CD4-positive, alpha-beta memory T cell (primary cell): ENCODE measurements at regions of chr21 and their contacts with region 1.

Region 1: DNA sequence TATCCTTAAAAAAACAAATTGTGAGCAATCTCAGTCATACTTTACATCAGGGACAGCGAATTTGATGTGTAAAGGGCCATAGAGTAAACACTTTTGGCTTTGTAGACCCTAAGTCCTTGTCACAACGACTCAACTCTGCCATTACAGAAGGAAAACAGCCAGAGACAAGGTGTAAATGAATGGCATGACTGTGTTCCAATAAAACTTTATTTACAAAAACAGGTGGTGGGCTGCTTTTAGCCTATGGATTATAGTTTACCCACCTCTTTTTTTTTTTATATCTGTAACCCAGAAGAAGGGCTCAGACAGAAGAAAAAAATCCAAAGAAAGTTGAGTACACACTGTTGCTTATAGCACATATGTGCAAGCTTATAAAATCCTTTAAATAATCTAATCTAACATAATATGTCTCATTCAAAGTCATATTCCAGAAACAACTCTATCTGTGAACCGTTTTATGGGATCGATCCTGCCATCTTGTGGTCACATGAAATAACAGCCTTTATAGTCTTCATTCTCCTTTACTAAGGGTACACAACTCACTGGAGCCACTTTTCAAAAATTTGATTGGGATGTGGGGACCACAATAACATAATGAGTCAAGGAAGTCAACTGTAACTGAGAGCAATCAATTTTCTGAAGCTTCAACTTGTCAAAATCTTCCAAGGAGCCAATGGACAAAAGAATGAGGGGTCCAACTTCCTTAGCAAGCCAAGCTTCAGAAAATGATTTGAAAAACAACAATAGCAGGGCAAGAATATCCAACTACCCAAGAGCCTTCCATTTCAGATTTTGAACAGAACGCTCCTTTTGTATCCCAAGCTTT is 142.2 kb upstream of the KRTAP19-8 start:
- DNase-seq: peak in 3 of 5 donors; percentile 28 to 49 (median 43)
- H3K4me3 ChIP-seq: peak overlapping the region; percentile 6 to 8
- H3K4me3 Mint-ChIP-seq: peak overlapping the region; percentile 70 to 94 (median 86)
- H3K27ac ChIP-seq: peak overlapping the region; percentile 56
- H3K27ac Mint-ChIP-seq: peak overlapping the region; percentile 93 to 95 (median 95)
- H3K4me1 ChIP-seq: peaks cover 91% of the 10 kb centered on the region
- H3K4me1 Mint-ChIP-seq: peaks cover 56 to 77% (median 67%) of the 10 kb centered on the region in 4 donors
- H3K27me3 ChIP-seq: no peaks in the 10 kb centered on the region
- H3K27me3 Mint-ChIP-seq: no peaks in the 10 kb centered on the region

Region 2: DNA sequence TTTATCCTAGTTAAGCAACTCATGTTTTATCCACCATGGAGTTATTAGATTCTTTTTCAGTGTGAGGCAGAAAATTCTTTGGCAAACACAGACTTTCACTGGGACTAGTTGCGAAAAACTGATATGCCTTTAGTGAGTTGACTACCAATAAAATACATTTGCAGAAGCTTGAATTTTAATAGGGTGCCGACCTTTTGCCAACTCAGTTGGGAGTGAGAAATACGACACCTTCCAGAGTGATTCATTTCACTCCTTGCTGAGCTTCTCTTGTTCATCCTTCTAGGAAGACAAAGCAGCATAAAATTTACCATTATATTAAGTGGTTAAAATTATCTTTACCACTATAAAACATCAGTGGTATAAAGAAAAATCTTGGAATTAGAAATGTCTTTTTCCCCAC is 830.9 kb before region 1 on chr21:
- CTCF ChIA-PET with region 1: no interaction called
- POLR2A ChIA-PET with region 1: no interaction called
- intact Hi-C with region 1: no loop called
- DNase-seq: no peak
- H3K4me3 ChIP-seq: no peak overlapping the region
- H3K4me3 Mint-ChIP-seq: no peak overlapping the region
- H3K27ac ChIP-seq: no peak overlapping the region
- H3K27ac Mint-ChIP-seq: no peak overlapping the region
- H3K4me1 ChIP-seq: no peaks in the 10 kb centered on the region
- H3K4me1 Mint-ChIP-seq: no peaks in the 10 kb centered on the region
- H3K27me3 ChIP-seq: no peaks in the 10 kb centered on the region
- H3K27me3 Mint-ChIP-seq: peaks cover 1% of the 10 kb centered on the region in 2 donors

Region 3: DNA sequence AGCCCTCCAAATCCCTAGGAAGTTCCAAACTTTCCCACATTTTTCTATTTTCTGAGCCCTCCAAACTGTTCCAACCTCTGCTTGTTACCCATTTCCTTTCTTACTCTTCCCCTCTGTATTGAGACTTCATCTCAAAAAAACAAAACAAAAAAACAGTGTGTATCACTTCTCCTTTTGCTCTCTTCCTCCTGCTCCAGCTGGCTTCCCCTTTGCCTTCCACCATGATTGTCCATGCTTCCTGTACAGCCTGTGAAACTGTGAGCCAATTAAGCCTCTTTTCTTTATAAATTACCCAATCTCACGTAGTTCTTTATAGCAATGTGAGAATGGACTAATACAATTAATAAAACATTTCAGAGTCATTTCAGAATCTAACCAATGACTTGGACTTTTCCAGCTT is 72.6 kb before region 1 on chr21:
- CTCF ChIA-PET with region 1: interaction called, 142 read pairs
- POLR2A ChIA-PET with region 1: interaction called, 51 read pairs
- intact Hi-C with region 1: no loop called
- DNase-seq: no peak
- H3K4me3 ChIP-seq: no peak overlapping the region
- H3K4me3 Mint-ChIP-seq: no peak overlapping the region
- H3K27ac ChIP-seq: no peak overlapping the region
- H3K27ac Mint-ChIP-seq: no peak overlapping the region
- H3K4me1 ChIP-seq: peaks cover 12% of the 10 kb centered on the region
- H3K4me1 Mint-ChIP-seq: peaks cover 13 to 21% (median 16%) of the 10 kb centered on the region in 4 donors
- H3K27me3 ChIP-seq: no peaks in the 10 kb centered on the region
- H3K27me3 Mint-ChIP-seq: no peaks in the 10 kb centered on the region

Region 4: GRCh38 chr21:31132574-31133242 is 47.8 kb before region 1 on chr21:
- CTCF ChIA-PET with region 1: interaction called, 33 read pairs
- POLR2A ChIA-PET with region 1: interaction called, 39 read pairs
- intact Hi-C with region 1: loop called (anchors 1 kb)
- DNase-seq: peak; percentile 83 to 93 (median 91)
- H3K4me3 ChIP-seq: peak overlapping the region in 1 of 2 donors; percentile 56
- H3K4me3 Mint-ChIP-seq: peak overlapping the region; percentile 66 to 94 (median 87)
- H3K27ac ChIP-seq: peak overlapping the region; percentile 29
- H3K27ac Mint-ChIP-seq: peak overlapping the region; percentile 85 to 95 (median 88)
- H3K4me1 ChIP-seq: peaks cover 47% of the 10 kb centered on the region
- H3K4me1 Mint-ChIP-seq: peaks cover 45 to 72% (median 53%) of the 10 kb centered on the region in 4 donors
- H3K27me3 ChIP-seq: no peaks in the 10 kb centered on the region
- H3K27me3 Mint-ChIP-seq: peaks cover 0 to 1% of the 10 kb centered on the region in 2 donors

Region 5: GRCh38 chr21:31198575-31198974 is 18.1 kb after region 1 on chr21:
- CTCF ChIA-PET with region 1: interaction called, 46 read pairs
- POLR2A ChIA-PET with region 1: interaction called, 42 read pairs
- intact Hi-C with region 1: loop called (anchors 1 kb)
- DNase-seq: peak in 3 of 5 donors; percentile 37 to 62 (median 54)
- H3K4me3 ChIP-seq: no peak overlapping the region
- H3K4me3 Mint-ChIP-seq: peak overlapping the region in 1 of 8 donors; percentile 31
- H3K27ac ChIP-seq: no peak overlapping the region
- H3K27ac Mint-ChIP-seq: peak overlapping the region in 2 of 7 donors; percentile 4 to 12
- H3K4me1 ChIP-seq: peaks cover 19% of the 10 kb centered on the region
- H3K4me1 Mint-ChIP-seq: peaks cover 21 to 41% (median 27%) of the 10 kb centered on the region in 4 donors
- H3K27me3 ChIP-seq: no peaks in the 10 kb centered on the region
- H3K27me3 Mint-ChIP-seq: no peaks in the 10 kb centered on the region

Region 6: DNA sequence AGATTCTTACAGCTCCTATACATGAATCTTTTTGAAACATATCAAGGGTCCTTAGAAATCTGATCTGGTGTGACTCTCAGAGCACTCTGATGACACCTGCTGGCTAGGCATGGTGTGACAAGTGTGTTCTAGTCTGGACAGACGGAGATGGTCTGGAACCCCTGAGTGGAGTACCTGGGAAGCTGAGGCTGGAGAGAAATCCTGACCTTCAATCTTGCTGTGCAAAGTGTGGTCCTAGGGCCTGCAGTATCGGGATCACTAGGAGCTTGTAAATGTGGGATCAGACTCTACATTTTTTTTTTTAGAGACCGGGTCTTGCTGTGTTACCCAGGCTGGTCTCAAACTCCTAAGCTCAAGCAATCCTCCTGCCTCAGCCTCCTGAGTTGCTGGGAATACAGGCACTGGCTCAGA is 400.4 kb after region 1 on chr21:
- CTCF ChIA-PET with region 1: interaction called, 44 read pairs
- POLR2A ChIA-PET with region 1: no interaction called
- intact Hi-C with region 1: loop called (anchors 1 kb)
- DNase-seq: peak; percentile 58 to 72 (median 66)
- H3K4me3 ChIP-seq: no peak overlapping the region
- H3K4me3 Mint-ChIP-seq: no peak overlapping the region
- H3K27ac ChIP-seq: no peak overlapping the region
- H3K27ac Mint-ChIP-seq: no peak overlapping the region
- H3K4me1 ChIP-seq: no peaks in the 10 kb centered on the region
- H3K4me1 Mint-ChIP-seq: peaks cover 3 to 6% (median 4%) of the 10 kb centered on the region in 4 donors
- H3K27me3 ChIP-seq: no peaks in the 10 kb centered on the region
- H3K27me3 Mint-ChIP-seq: peaks cover 0 to 3% of the 10 kb centered on the region in 2 donors

Region 7: GRCh38 chr21:31731802-31732596 is 551.5 kb after region 1 on chr21 and contains the start of gene SCAF4:
- CTCF ChIA-PET with region 1: no interaction called
- POLR2A ChIA-PET with region 1: no interaction called
- intact Hi-C with region 1: loop called (anchors 5 kb)
- DNase-seq: peak; percentile 73 to 80 (median 76)
- H3K4me3 ChIP-seq: peak within 1 kb of the TSS; percentile 67 to 89
- H3K4me3 Mint-ChIP-seq: peak within 1 kb of the TSS; percentile 24 to 94 (median 90)
- H3K27ac ChIP-seq: peak within 1 kb of the TSS; percentile 82
- H3K27ac Mint-ChIP-seq: peak within 1 kb of the TSS; percentile 54 to 94 (median 88)
- H3K4me1 ChIP-seq: peaks cover 50% of the 10 kb centered on the region
- H3K4me1 Mint-ChIP-seq: peaks cover 4 to 18% (median 9%) of the 10 kb centered on the region in 4 donors
- H3K27me3 ChIP-seq: no peaks in the 10 kb centered on the region
- H3K27me3 Mint-ChIP-seq: no peaks in the 10 kb centered on the region
- total RNA-seq, gene SCAF4: 60.2 to 64.7 TPM